Endothelial cell of umbilical vein (primary cell): ENCODE measurements at regions of chr12 and their contacts with region 1.

Region 1: GRCh38 chr12:124713436-124714082 is 146.1 kb upstream of the NCOR2 start:
- DNase-seq: peak; percentile 96
- H3K4me3 ChIP-seq: peak overlapping the region in 1 of 3 experiments; percentile 9
- H3K27ac ChIP-seq: peak overlapping the region; percentile 94
- H3K4me1 ChIP-seq: peaks cover 24% of the 10 kb centered on the region
- H3K27me3 ChIP-seq: no peaks in the 10 kb centered on the region
- CTCF ChIP-seq: no peak
- POLR2A ChIP-seq: peak; percentile 35

Region 2: DNA sequence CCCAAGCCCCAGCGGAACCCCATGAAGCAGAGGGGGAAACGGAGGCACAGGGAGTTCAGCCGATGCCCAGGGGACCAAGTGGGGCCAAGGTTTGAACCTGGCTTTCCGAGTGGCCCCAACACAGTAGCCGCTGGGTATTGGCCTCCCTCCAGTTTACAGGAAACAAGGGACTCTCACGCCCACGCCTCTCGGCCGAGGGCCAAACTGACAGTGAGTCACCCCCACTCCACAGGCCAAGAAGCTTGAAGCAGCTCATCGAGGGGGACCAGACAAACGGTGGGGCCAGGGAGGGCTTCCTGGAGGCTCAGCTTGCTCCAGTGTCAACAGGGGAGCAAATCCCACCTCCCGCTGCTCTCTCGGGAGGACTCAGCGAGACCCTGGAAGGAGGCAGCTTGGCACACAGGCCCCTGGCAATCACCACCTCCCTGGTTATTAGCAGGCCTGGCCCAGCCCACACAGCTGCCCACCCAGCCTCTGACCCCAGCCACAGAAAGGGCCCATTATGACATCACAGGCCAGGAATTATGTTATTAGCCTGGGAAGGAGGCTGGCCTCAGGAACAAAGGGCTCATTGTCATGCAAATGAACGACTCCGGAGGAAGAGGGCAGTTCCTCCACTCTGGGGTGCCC is 200.8 kb before region 1 on chr12:
- CTCF ChIA-PET with region 1: no interaction called
- POLR2A ChIA-PET with region 1: no interaction called
- dilution Hi-C with region 1: no loop called
- intact Hi-C with region 1: loop called (anchors 1 kb)
- DNase-seq: peak; percentile 96
- H3K4me3 ChIP-seq: no peak overlapping the region
- H3K27ac ChIP-seq: peak overlapping the region; percentile 94
- H3K4me1 ChIP-seq: peaks cover 50% of the 10 kb centered on the region
- H3K27me3 ChIP-seq: no peaks in the 10 kb centered on the region
- CTCF ChIP-seq: no peak
- POLR2A ChIP-seq: no peak